Panc1 (cell line): ENCODE measurements at regions of chr5 and their contacts with region 1.

Region 1: GRCh38 chr5:92309336-92309991 is 926.3 kb upstream of the ARRDC3 start:
- DNase-seq: peak; percentile 24
- ATAC-seq: peak; percentile 71; the same call in 1 of the 2 replicates
- H3K4me3 ChIP-seq: no peak overlapping the region
- H3K27ac ChIP-seq: peak overlapping the region; percentile 82
- H3K4me1 ChIP-seq: peaks cover 16% of the 10 kb centered on the region
- H3K27me3 ChIP-seq: no peaks in the 10 kb centered on the region
- CTCF ChIP-seq: peak; percentile 60; the same call in 1 of the 2 replicates

Region 2: DNA sequence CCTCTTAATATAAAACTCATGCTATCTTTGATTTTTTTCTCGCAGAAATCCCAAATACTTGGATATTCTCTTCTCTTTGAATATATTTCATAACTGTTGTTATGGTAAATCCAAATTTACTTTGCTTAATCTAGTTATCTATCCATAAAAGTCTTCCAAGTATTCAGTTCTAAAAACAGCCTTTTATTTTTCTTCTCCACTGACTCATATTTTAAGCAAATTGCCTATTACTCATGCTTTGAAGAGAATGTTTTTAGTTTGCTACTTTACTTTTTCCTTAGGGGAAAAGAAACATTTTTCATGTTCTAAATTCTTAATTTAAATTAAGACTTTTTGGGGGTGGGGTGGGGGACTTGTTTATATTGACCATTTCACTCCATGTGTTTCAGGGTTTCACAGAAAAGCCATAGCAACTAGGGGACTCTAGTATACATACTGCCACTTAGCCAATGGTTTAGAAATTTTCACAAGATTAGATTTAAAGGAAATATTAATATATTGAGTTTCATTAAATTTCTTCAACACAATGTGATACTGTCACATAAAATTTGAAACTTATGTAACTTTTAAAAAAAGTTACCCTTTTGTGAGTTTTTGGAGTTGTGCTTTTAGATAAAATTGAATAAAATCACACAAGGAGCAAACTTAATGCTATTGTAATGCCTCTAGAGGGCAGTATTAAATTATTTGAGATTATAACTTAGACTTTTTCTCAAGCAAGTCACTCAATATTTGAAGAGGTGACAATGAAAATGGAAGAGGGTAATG is 380.5 kb before region 1 on chr5:
- CTCF ChIA-PET with region 1: no interaction called
- POLR2A ChIA-PET with region 1: no interaction called
- in situ Hi-C with region 1: no loop called
- intact Hi-C with region 1: loop called (anchors 5 kb)
- DNase-seq: peak; percentile 38
- ATAC-seq: peak; percentile 72; the same call in 1 of the 2 replicates
- H3K4me3 ChIP-seq: no peak overlapping the region
- H3K27ac ChIP-seq: peak overlapping the region; percentile 64; the same call in 1 of the 2 replicates
- H3K4me1 ChIP-seq: no peaks in the 10 kb centered on the region
- H3K27me3 ChIP-seq: no peaks in the 10 kb centered on the region
- CTCF ChIP-seq: peak; percentile 58; the same call in 1 of the 2 replicates

Region 3: DNA sequence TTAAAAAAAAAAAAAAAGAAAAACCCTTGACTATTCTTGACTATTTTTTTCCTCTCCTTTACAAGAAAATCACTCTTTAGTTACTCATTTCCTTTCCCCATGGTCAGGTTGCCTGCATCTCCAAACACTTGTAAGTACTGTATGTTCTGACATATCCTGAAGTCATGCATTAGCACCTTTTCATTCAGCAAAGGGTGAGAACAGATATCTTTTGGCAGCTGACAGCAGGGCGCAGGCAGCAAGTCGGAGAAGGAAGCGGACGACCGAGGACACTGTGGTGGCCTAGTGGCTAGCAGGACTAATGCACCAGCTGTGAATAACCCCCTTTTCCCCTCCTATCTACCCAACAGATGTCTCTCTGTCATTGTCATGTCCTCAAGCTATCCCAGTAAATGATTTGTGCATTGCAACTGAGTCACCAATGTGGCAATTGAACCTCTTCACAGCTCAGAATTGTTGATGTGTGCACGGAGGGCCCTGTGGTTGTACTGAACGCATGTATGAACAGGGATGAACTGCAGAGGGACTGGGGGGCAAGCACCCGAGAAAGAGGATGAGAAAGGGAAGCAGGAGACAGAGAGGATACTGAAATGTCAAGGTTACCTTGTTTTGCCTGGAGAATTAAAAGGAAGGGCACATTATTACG is 69.6 kb after region 1 on chr5:
- CTCF ChIA-PET with region 1: no interaction called
- POLR2A ChIA-PET with region 1: no interaction called
- in situ Hi-C with region 1: no loop called
- intact Hi-C with region 1: no loop called
- DNase-seq: no peak
- ATAC-seq: peak; percentile 93
- H3K4me3 ChIP-seq: peak overlapping the region in 1 of 2 experiments; percentile 34; a peak in 2 of 4 replicates
- H3K27ac ChIP-seq: peak overlapping the region; percentile 71
- H3K4me1 ChIP-seq: peaks cover 27% of the 10 kb centered on the region
- H3K27me3 ChIP-seq: no peaks in the 10 kb centered on the region
- CTCF ChIP-seq: no peak

Region 4: DNA sequence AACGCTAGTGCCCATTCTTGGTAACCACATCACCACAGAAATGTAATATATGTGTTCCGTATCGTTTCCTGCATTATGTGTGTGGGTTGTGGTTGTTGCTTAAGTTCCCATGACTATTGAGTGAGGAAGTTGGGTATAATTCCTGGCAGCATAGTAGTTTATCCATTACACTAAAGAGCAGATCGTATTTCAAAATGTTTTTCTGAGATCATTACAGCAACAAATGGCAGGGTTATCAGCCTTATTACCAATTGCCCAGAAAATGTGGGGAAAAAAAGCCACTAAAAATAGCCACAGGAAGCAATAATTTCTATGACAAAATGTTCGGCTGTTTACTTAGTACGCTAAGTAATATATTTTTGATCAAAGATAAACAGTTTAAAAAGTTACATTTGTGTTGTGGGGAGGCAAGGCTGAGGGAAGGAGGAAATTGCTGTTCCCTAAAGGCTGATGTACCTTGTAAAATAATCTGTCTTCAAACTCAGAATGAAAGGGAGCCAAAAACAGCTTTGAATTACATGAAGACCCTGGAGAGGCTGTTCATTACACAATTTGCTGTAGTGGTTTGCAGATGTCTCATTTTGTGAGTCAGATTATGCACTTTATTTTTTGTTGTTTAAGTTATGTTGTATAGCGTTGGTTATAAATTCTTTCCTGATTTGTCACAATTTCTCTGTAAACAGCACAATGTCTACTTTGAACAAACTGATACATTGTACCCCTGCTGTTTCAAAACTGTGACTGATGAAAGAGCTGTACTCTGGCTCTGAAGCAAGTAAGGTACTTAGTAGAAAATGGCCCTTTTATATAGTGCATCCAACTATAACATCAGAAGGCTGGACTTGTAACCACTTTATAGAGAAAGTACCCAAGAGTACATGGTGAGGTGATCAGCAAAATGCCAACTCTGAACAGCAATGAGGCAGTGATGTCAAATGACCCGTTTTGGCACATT is 243.0 kb after region 1 on chr5:
- CTCF ChIA-PET with region 1: no interaction called
- POLR2A ChIA-PET with region 1: no interaction called
- in situ Hi-C with region 1: no loop called
- intact Hi-C with region 1: loop called (anchors 5 kb)
- DNase-seq: peak; percentile 94
- ATAC-seq: peak; percentile 95
- H3K4me3 ChIP-seq: no peak overlapping the region
- H3K27ac ChIP-seq: peak overlapping the region; percentile 100
- H3K4me1 ChIP-seq: peaks cover 15% of the 10 kb centered on the region; the same call in 1 of the 2 replicates
- H3K27me3 ChIP-seq: no peaks in the 10 kb centered on the region
- CTCF ChIP-seq: no peak